HEK293 (cell line): ENCODE measurements at regions of chr11 and their contacts with region 1.

Region 1: GRCh38 chr11:75532200-75533048 is 6.7 kb upstream of the GDPD5 start:
- H3K4me3 ChIP-seq: no peak overlapping the region
- H3K27ac ChIP-seq: no peak overlapping the region
- H3K4me1 ChIP-seq: no peaks in the 10 kb centered on the region
- CTCF ChIP-seq: peak; percentile 60; the same call in 1 of the 2 replicates

Region 2: GRCh38 chr11:75270896-75271418 is 261.5 kb before region 1 on chr11:
- CTCF ChIA-PET with region 1: interaction called, 10 read pairs
- POLR2A ChIA-PET with region 1: no interaction called
- H3K4me3 ChIP-seq: no peak overlapping the region
- H3K27ac ChIP-seq: no peak overlapping the region
- H3K4me1 ChIP-seq: no peaks in the 10 kb centered on the region
- CTCF ChIP-seq: no peak

Region 3: GRCh38 chr11:75408852-75409219 is 123.6 kb before region 1 on chr11:
- CTCF ChIA-PET with region 1: interaction called, 13 read pairs
- POLR2A ChIA-PET with region 1: no interaction called
- H3K4me3 ChIP-seq: no peak overlapping the region
- H3K27ac ChIP-seq: no peak overlapping the region
- H3K4me1 ChIP-seq: no peaks in the 10 kb centered on the region
- CTCF ChIP-seq: no peak

Region 4: DNA sequence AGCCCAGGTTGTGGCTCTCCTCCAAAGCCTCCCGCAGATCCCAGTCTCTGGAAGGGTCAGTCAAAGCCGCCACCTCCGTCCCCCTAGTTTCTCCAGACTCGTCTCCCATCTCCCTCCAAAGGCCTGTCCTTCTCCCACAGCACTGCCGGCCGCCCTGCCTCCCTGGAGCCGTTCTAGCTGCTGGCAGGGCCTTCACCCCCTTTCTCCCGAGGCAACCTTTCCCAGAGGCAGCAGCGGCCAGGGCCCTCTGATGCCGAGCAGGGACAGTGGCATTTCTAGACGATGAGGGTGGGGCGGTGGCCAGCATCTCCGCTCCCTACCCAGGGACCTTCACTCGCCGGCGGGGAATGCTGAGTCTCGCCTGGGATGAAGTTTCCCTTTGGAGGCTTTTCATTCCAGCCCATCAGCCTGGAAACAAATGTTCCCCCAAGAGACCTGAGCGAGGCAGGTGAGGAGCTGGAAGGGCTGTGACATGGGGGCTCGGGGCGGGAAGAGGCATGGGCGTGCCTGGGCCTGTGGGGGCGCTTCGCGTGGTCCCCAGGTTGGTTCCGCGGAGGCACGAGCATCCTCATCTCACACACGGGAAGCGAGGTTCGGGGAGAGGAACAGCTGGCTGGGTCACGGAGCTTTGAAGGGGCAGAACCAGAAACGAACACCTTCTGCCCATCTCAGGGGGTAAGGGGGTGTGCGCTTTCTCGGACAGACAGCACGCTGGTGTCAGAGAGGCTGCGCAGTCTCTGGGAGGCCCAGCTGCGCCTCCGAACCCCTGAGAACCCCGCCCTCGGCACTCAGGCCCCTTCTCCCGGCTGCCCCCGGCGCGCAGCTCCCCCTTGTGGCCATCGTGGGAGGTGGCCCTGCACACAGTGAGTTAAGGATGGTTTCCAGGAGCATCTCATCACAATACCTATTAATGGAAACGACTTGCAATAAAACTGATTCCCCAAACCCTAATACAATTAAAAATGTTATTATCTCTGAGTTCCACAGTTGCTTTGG is 81.3 kb before region 1 on chr11:
- CTCF ChIA-PET with region 1: interaction called, 264 read pairs
- POLR2A ChIA-PET with region 1: interaction called, 3 read pairs
- H3K4me3 ChIP-seq: no peak overlapping the region
- H3K27ac ChIP-seq: no peak overlapping the region
- H3K4me1 ChIP-seq: no peaks in the 10 kb centered on the region
- CTCF ChIP-seq: peak; percentile 48

Region 5: GRCh38 chr11:75505916-75506692 is 26.3 kb before region 1 on chr11:
- CTCF ChIA-PET with region 1: no interaction called
- POLR2A ChIA-PET with region 1: no interaction called
- H3K4me3 ChIP-seq: no peak overlapping the region
- H3K27ac ChIP-seq: no peak overlapping the region
- H3K4me1 ChIP-seq: no peaks in the 10 kb centered on the region
- CTCF ChIP-seq: no peak

Region 6: GRCh38 chr11:75520688-75521087 is 11.7 kb before region 1 on chr11:
- CTCF ChIA-PET with region 1: interaction called, 26 read pairs
- POLR2A ChIA-PET with region 1: interaction called, 4 read pairs
- H3K4me3 ChIP-seq: no peak overlapping the region
- H3K27ac ChIP-seq: no peak overlapping the region
- H3K4me1 ChIP-seq: no peaks in the 10 kb centered on the region
- CTCF ChIP-seq: no peak

Region 7: DNA sequence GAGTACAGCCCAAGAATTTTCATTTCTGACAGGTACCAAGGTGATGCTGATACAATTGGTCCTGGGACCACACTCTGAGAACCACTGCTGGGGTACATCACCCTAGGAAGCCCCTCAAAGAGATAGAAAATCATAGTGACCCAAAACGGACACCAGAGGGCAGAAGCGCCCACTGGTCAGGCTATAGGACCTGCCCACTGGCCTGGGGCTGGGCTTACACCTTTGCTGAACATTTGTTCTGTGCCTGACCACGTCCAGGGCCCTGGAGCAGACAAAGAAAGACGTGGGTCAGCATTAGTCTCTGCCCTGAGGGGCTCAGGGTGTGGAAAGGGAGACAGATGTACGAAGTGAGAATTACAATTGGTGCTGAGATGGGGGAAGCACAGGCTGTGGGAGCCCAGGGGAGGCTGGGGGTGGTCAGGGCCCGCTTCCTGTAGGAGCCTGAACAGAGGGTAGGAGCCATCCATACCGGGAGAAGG is 15.2 kb after region 1 on chr11:
- CTCF ChIA-PET with region 1: interaction called, 20 read pairs
- POLR2A ChIA-PET with region 1: no interaction called
- H3K4me3 ChIP-seq: no peak overlapping the region
- H3K27ac ChIP-seq: no peak overlapping the region
- H3K4me1 ChIP-seq: no peaks in the 10 kb centered on the region
- CTCF ChIP-seq: peak; percentile 63

Region 8: DNA sequence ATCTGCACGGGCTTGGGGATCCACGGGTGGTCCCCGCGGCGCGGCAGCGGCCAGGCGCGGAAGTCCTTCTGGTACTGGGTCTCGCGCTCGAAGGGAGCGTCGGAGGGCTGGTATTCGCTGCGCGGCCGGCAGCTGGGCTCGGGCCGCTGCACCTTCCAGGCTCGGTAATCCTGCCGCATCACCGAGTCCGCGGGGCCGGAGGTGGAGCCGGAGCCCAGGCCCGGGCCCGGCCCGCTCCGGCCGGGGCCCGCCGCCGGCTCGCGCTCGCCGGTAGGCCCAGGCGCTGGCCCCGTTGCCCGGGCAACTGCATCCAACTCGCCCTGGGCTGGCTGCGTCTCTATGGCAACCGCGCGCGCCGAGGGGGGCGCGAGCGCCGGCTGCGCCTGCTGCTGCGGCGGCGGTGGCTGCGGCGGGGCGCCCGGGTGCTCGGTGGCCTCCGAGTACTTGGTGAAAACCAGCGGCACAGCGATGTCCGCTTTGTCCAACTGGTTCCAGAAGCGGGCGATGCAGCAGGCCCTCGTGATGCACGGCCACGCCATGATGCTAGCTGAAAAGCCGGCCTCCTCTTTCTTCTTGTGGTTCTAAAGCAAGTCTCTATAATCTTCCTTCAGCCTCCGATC is 135.5 kb after region 1 on chr11:
- CTCF ChIA-PET with region 1: no interaction called
- POLR2A ChIA-PET with region 1: no interaction called
- H3K4me3 ChIP-seq: peak overlapping the region; percentile 41
- H3K27ac ChIP-seq: peak overlapping the region; percentile 20; the same call in 1 of the 2 replicates
- H3K4me1 ChIP-seq: no peaks in the 10 kb centered on the region
- CTCF ChIP-seq: no peak